ENCODE measurements at regions of chr16 and their contacts with region 1.

Region 1: GRCh38 chr16:28218104-28218503 is 6.3 kb upstream of the XPO6 start:
- DNase-seq: peak; percentile 78
- ATAC-seq: peak; percentile 88
- H3K4me3 ChIP-seq: no peak overlapping the region
- H3K4me3 Mint-ChIP-seq: no peak overlapping the region
- H3K27ac ChIP-seq: no peak overlapping the region
- H3K27ac Mint-ChIP-seq: no peak overlapping the region
- H3K4me1 ChIP-seq: no peaks in the 10 kb centered on the region
- H3K4me1 Mint-ChIP-seq: no peaks in the 10 kb centered on the region
- H3K27me3 ChIP-seq: no peaks in the 10 kb centered on the region
- H3K27me3 Mint-ChIP-seq: no peaks in the 10 kb centered on the region
- CTCF ChIP-seq: peak; percentile 68

Region 2: DNA sequence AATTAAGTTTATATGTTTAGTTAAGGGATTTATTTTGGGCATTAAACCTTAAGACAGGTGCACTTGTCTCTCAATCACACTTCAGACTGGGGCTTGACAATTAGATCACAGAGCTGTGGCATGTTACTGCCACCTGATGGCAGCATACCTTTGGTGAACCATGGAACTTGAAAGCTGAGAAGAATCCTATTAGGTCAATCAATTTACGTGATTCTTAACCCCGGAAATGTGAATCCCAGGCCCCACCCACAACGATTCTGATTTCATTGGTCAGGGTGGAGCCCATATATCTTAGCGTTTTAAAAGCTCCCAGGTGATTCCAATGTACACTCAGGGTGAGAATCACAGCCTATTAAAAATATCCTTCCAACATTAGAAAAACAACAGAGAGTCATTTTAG is 245.6 kb before region 1 on chr16:
- CTCF ChIA-PET with region 1: interaction called, 49 read pairs
- POLR2A ChIA-PET with region 1: no interaction called
- intact Hi-C with region 1: no loop called
- DNase-seq: peak; percentile 47
- ATAC-seq: peak; percentile 41
- H3K4me3 ChIP-seq: no peak overlapping the region
- H3K4me3 Mint-ChIP-seq: no peak overlapping the region
- H3K27ac ChIP-seq: no peak overlapping the region
- H3K27ac Mint-ChIP-seq: no peak overlapping the region
- H3K4me1 ChIP-seq: peaks cover 0 to 4% of the 10 kb centered on the region in 2 donors
- H3K4me1 Mint-ChIP-seq: peaks cover 3% of the 10 kb centered on the region
- H3K27me3 ChIP-seq: peaks cover 0 to 5% (median 0%) of the 10 kb centered on the region in 4 experiments
- H3K27me3 Mint-ChIP-seq: peaks cover 23% of the 10 kb centered on the region
- CTCF ChIP-seq: peak; percentile 39

Region 3: DNA sequence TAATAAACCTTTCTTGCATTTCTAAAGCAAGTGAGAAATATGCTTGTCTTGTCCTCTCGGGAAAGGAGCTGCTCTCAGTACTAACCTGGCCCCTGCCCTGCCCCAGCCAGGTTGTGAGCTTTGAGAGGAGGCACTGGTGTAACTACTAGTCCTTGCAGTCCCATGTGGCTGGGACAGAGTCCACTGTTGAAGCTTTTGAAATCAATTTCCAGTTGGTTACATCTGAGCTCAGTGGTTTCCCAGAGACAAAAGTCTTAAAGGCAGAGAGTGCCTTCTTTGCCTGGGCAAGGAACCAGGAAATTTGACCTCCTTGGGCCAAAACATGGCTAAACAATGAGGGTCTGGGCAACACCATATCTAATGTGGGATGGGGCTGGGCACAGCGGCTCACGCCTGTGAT is 203.3 kb before region 1 on chr16:
- CTCF ChIA-PET with region 1: no interaction called
- POLR2A ChIA-PET with region 1: no interaction called
- intact Hi-C with region 1: no loop called
- DNase-seq: no peak
- ATAC-seq: no peak
- H3K4me3 ChIP-seq: no peak overlapping the region
- H3K4me3 Mint-ChIP-seq: no peak overlapping the region
- H3K27ac ChIP-seq: no peak overlapping the region
- H3K27ac Mint-ChIP-seq: no peak overlapping the region
- H3K4me1 ChIP-seq: no peaks in the 10 kb centered on the region
- H3K4me1 Mint-ChIP-seq: no peaks in the 10 kb centered on the region
- H3K27me3 ChIP-seq: peaks cover 0 to 7% (median 0%) of the 10 kb centered on the region in 4 experiments
- H3K27me3 Mint-ChIP-seq: peaks cover 28% of the 10 kb centered on the region
- CTCF ChIP-seq: no peak

Region 4: DNA sequence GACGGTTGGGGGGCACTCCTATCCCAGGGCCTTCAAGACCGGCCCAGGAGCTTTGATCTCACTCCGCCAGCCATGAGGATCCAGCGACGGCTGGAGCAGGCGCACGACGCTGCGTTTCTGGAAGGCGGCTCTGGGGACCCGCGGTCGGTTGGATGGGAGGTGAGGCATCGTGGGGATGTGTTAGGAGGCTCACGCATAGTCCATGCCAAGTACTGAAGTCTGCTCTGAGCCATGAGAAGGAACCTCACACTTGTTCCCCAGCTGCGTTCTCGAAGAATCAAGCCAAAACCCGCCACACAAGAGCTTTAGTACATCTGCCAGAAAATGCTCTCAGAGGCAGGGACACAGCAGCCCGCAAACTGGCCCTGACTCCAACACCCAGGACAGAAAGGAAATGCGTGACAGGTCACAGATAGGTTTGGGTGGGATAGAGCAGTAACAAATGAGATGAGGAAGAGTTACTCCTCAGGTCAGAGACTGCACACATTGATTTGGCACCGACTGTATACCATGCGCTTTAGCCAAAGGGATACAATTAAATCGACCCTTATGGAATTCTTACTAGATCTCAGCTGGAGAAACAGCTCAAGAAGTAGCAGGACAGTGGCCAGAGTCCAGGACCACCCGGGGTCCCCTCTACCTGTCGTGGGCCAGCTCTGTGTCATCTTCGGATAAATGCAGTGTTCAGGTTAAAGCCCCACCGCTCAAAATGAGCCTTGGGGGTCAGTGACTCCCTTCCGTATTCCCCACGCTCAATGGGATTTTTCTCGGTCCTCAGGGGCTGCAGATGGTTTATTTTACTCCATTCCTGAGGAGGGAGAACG is 147.9 kb before region 1 on chr16:
- CTCF ChIA-PET with region 1: interaction called, 15 read pairs
- POLR2A ChIA-PET with region 1: no interaction called
- intact Hi-C with region 1: no loop called
- DNase-seq: no peak
- ATAC-seq: no peak
- H3K4me3 ChIP-seq: no peak overlapping the region
- H3K4me3 Mint-ChIP-seq: no peak overlapping the region
- H3K27ac ChIP-seq: no peak overlapping the region
- H3K27ac Mint-ChIP-seq: no peak overlapping the region
- H3K4me1 ChIP-seq: no peaks in the 10 kb centered on the region
- H3K4me1 Mint-ChIP-seq: no peaks in the 10 kb centered on the region
- H3K27me3 ChIP-seq: no peaks in the 10 kb centered on the region
- H3K27me3 Mint-ChIP-seq: peaks cover 24% of the 10 kb centered on the region
- CTCF ChIP-seq: no peak

Region 5: GRCh38 chr16:28205117-28205899 is 12.8 kb before region 1 on chr16:
- CTCF ChIA-PET with region 1: interaction called, 4 read pairs
- POLR2A ChIA-PET with region 1: interaction called, 10 read pairs
- intact Hi-C with region 1: no loop called
- DNase-seq: no peak
- ATAC-seq: no peak
- H3K4me3 ChIP-seq: no peak overlapping the region
- H3K4me3 Mint-ChIP-seq: no peak overlapping the region
- H3K27ac ChIP-seq: no peak overlapping the region
- H3K27ac Mint-ChIP-seq: no peak overlapping the region
- H3K4me1 ChIP-seq: peaks cover 56 to 60% of the 10 kb centered on the region in 2 donors
- H3K4me1 Mint-ChIP-seq: peaks cover 40% of the 10 kb centered on the region
- H3K27me3 ChIP-seq: no peaks in the 10 kb centered on the region
- H3K27me3 Mint-ChIP-seq: no peaks in the 10 kb centered on the region
- CTCF ChIP-seq: no peak

Measured in B cell (primary cell).